Body of pancreas (tissue), 4 donors: ENCODE measurements at regions of chr10 and their contacts with region 1.

Region 1: DNA sequence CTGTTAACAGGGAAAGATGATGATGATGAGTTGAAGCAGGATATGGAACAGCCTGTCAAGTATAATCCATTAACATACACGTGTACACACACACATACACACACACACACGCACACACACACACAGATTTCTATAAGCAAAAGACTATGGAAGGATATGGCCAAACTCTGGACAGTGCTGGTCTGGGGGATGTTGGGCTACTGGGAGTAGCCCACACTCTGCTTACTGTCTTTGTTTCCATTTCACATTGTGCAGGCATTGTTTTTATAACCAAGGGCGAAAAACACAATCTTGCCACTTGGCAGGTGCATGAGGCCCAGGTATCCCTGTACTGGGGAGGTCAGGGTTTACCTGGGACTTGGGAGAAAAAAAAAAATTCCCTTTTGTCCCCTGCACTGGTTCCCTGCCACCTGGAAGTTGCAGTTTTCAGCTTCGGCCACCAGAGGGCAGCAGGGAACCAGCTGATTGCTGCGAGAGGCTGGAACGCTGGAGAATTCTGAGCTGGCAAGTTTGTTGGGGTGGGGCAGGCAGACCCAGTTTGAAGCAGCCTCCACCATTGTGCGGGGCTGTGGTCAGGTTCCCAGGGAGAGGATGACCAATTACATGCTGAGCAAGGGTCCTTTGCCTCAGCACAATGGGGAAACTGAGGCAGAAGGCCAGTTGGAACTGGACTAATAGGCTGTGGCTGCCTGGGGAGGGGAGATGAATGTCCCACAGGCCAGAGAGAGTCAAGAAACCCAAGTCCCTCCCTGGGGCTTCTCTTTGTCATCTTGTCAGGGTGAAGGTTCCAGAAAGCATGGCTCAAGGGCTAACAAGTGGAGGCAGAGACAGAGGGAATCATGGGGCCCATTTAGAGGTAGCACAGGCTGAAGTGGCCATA is 27.3 kb downstream of the PPIF start:
- DNase-seq: peak; percentile 82 to 86 (median 84)
- ATAC-seq: peak; percentile 87
- H3K4me3 ChIP-seq: no peak overlapping the region
- H3K27ac ChIP-seq: no peak overlapping the region
- H3K4me1 ChIP-seq: peaks cover 1% of the 10 kb centered on the region
- H3K27me3 ChIP-seq: no peaks in the 10 kb centered on the region
- CTCF ChIP-seq: peak; percentile 90 to 98 (median 96)
- POLR2A ChIP-seq: no peak

Region 2: GRCh38 chr10:79073784-79074432 is 300.6 kb before region 1 on chr10:
- intact Hi-C with region 1: no loop called
- DNase-seq: peak; percentile 66 to 84 (median 70)
- ATAC-seq: no peak
- H3K4me3 ChIP-seq: no peak overlapping the region
- H3K27ac ChIP-seq: peak overlapping the region; percentile 13 to 97 (median 95)
- H3K4me1 ChIP-seq: peaks cover 77% of the 10 kb centered on the region
- H3K27me3 ChIP-seq: no peaks in the 10 kb centered on the region
- CTCF ChIP-seq: no peak
- POLR2A ChIP-seq: no peak

Region 3: GRCh38 chr10:79463578-79464496 is 89.3 kb after region 1 on chr10:
- intact Hi-C with region 1: loop called (anchors 5 kb)
- DNase-seq: peak in 3 of 4 donors; percentile 18 to 39 (median 24)
- ATAC-seq: no peak
- H3K4me3 ChIP-seq: no peak overlapping the region
- H3K27ac ChIP-seq: no peak overlapping the region
- H3K4me1 ChIP-seq: peaks cover 10% of the 10 kb centered on the region
- H3K27me3 ChIP-seq: no peaks in the 10 kb centered on the region
- CTCF ChIP-seq: no peak
- POLR2A ChIP-seq: no peak

Region 4: GRCh38 chr10:79483948-79484347 is 109.4 kb after region 1 on chr10:
- intact Hi-C with region 1: loop called (anchors 5 kb)
- DNase-seq: peak in 1 of 4 donors; percentile 41
- ATAC-seq: peak; percentile 48
- H3K4me3 ChIP-seq: no peak overlapping the region
- H3K27ac ChIP-seq: peak overlapping the region in 1 of 4 donors; percentile 31
- H3K4me1 ChIP-seq: no peaks in the 10 kb centered on the region
- H3K27me3 ChIP-seq: no peaks in the 10 kb centered on the region
- CTCF ChIP-seq: no peak
- POLR2A ChIP-seq: no peak

Region 5: DNA sequence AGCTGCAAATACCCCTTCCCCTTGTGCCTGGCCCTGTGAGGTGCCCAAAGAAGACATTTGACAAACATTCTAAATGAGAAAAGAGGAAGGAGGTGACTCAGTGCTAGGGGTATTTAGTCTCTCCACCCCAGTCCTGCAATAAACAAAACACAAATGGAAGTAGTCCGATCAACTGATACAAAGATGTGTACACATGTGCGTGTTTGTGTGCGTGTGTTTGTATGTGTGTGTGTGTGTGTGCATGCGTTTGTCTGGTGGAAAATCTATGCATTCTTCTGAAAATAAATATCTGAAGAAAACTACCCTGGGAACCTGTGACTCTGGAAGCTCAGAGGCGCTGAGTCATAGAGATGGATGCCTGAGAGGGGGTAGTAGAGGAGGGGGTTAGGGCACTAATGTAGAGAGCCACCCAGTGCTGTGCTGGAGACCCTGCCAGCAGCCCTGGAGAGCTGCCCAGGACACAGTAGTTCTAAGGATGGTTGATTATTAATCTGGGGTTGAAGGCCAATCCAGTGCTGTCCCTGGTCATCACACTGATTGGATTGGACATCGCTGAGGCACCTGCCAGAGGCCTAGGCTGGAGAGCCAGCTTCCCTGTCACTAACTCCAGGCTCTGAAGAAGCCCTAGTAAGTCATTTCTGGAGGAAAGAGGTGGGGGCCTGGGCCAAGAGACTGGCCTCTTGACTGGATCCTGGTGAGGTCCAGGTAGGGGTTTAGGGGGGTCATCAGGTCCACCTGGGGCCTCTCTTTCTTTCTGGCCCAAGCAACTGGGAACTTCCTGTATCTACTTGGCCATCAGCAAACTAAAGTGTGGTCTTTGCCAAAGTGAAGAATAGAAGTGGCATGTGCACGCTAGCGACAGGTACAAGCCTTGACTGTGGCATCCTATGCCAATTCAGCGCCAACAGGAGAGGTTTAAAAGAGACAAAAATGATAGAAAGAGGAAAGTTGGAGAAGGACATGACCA is 254.7 kb after region 1 on chr10:
- intact Hi-C with region 1: no loop called
- DNase-seq: no peak
- ATAC-seq: no peak
- H3K4me3 ChIP-seq: no peak overlapping the region
- H3K27ac ChIP-seq: no peak overlapping the region
- H3K4me1 ChIP-seq: no peaks in the 10 kb centered on the region
- H3K27me3 ChIP-seq: no peaks in the 10 kb centered on the region
- CTCF ChIP-seq: no peak
- POLR2A ChIP-seq: no peak